ENCODE measurements at regions of chr1 and their contacts with region 1.

Region 1: DNA sequence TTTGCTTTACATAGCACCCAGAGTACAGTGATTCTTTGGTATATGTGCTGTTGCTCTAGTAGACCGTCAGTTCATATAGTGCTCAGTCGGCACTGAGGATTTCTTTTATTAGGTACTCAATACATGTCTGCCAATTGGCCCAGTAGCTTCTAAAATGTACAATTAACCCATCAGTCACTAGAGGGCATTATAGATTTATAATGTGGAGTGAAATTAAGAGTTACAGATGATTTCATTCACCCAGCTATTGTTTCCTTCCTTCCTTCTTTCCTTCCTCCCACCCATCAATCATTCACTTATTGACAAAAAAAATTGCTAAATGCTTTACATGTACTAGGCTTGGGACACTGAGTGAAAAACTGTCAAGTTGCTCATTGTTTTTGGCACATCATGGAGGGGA is 263.6 kb upstream of the USP24 start:
- DNase-seq: no peak
- H3K4me3 ChIP-seq: no peak overlapping the region
- H3K4me3 Mint-ChIP-seq: no peak overlapping the region
- H3K27ac Mint-ChIP-seq: no peak overlapping the region
- H3K4me1 ChIP-seq: peaks cover 15% of the 10 kb centered on the region
- H3K4me1 Mint-ChIP-seq: peaks cover 25% of the 10 kb centered on the region
- H3K27me3 ChIP-seq: no peaks in the 10 kb centered on the region
- H3K27me3 Mint-ChIP-seq: no peaks in the 10 kb centered on the region
- CTCF ChIP-seq: no peak

Region 2: DNA sequence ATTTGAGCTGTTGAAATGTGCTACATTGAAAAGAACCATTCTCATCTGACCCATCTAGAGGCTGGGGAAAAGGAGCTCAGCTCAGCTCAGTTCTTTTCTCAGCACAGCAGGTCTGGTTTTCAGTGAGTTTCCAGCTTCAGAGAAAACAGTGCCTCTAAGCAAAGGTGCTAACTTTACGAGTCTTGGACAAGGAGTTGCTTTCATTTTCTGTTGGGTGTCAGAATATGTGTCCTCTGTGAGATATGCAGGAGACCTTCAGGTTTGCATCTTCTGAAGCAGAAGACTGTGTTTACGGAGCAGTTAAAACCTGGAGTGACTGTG is 57.8 kb after region 1 on chr1:
- CTCF ChIA-PET with region 1: no interaction called
- POLR2A ChIA-PET with region 1: no interaction called
- intact Hi-C with region 1: loop called (anchors 2 kb)
- DNase-seq: no peak
- H3K4me3 ChIP-seq: no peak overlapping the region
- H3K4me3 Mint-ChIP-seq: no peak overlapping the region
- H3K27ac Mint-ChIP-seq: no peak overlapping the region
- H3K4me1 ChIP-seq: peaks cover 30% of the 10 kb centered on the region
- H3K4me1 Mint-ChIP-seq: no peaks in the 10 kb centered on the region
- H3K27me3 ChIP-seq: no peaks in the 10 kb centered on the region
- H3K27me3 Mint-ChIP-seq: no peaks in the 10 kb centered on the region
- CTCF ChIP-seq: no peak

Region 3: DNA sequence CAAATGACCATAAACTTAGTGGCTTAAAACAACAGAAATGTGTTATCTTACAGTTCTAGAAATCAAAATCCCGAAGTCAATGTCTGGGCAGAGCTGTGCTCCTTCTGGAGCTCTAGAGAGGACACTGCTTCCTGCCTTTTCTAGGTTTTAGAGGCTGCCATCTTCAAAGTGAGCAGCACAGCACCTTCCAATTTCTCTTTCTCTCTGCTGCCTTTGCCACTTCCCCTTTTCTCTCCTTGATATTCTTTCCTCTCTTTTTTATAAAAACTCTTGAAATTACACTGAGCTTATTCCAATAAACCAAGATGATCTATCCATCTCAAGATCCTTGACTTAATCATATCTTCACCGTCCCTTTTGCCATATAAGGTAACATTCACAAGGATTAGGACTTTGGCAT is 483.7 kb after region 1 on chr1:
- CTCF ChIA-PET with region 1: no interaction called
- POLR2A ChIA-PET with region 1: no interaction called
- intact Hi-C with region 1: loop called (anchors 5 kb)
- DNase-seq: no peak
- H3K4me3 ChIP-seq: no peak overlapping the region
- H3K4me3 Mint-ChIP-seq: no peak overlapping the region
- H3K27ac Mint-ChIP-seq: no peak overlapping the region
- H3K4me1 ChIP-seq: no peaks in the 10 kb centered on the region
- H3K4me1 Mint-ChIP-seq: no peaks in the 10 kb centered on the region
- H3K27me3 ChIP-seq: no peaks in the 10 kb centered on the region
- H3K27me3 Mint-ChIP-seq: peaks cover 7% of the 10 kb centered on the region
- CTCF ChIP-seq: no peak